Heart left ventricle (tissue), 16 donors: ENCODE measurements at regions of chr12 and their contacts with region 1.

Region 1: GRCh38 chr12:9707864-9708808 is 24.8 kb downstream of the CLECL1 start:
- DNase-seq: peak; percentile 30 to 54 (median 40)
- ATAC-seq: peak in 3 of 4 donors; percentile 68 to 74 (median 70)
- H3K4me3 ChIP-seq: no peak overlapping the region
- H3K27ac ChIP-seq: peak overlapping the region in 1 of 12 donors; percentile 73
- H3K4me1 ChIP-seq: peaks cover 0 to 33% (median 0%) of the 10 kb centered on the region in 12 donors
- H3K27me3 ChIP-seq: no peaks in the 10 kb centered on the region
- CTCF ChIP-seq: peak; percentile 60 to 81 (median 72)
- POLR2A ChIP-seq: no peak

Region 2: DNA sequence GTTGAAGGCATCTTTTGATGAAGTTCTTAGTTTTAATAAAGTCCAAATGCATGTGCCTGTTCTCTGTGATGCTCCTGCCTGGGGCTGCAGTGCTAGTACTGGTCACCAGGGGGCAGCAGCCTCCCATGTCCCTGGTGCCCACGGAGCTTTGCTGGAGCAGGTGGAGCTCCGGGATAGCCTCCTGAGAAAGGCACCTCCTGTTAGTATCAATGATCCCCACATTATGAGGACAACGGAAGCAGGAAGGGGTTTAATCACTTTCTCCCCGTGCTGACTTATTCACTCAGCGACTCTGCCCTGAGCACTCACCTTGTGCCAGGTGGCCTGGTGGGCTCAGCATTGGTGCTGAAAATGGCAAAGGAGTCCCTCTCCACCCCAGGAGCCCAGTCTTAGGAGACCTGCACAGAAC is 376.9 kb before region 1 on chr12:
- intact Hi-C with region 1: loop called in 7 of 10 experiments (anchors 2 to 10 kb)
- DNase-seq: peak; percentile 34 to 84 (median 60)
- ATAC-seq: peak in 3 of 4 donors; percentile 62 to 86 (median 74)
- H3K4me3 ChIP-seq: no peak overlapping the region
- H3K27ac ChIP-seq: no peak overlapping the region
- H3K4me1 ChIP-seq: peaks cover 0 to 2% (median 0%) of the 10 kb centered on the region in 12 donors
- H3K27me3 ChIP-seq: no peaks in the 10 kb centered on the region
- CTCF ChIP-seq: peak; percentile 88 to 98 (median 95)
- POLR2A ChIP-seq: no peak

Region 3: DNA sequence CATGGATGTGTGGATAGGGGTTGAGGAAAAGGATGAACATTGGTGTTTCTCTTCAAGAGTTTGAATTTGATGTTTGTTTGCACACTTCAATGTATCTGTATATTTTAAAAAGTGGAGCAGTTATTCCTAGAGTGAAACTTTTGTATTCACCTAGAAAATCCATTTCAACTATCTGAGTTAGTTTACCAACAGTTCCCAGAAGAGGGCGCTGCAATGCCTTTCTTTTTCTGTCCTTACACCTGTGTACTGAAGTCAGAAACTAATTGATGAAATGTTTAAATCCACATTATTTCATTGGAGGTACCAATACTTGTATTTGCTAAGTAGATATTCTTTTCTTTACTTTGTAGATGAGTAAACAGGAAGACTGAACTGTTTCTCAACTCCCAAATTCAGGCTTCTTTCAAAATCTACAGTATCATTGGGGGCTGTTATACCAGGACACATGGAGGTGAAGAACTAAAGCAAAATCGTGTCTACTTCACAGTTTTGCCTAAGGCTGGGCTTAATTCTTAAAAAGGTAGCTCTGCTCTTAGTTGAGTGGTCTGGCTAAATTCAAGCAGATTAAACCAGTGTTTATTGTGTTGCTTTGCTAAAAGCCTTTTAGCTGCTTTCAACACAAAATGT is 73.8 kb before region 1 on chr12:
- intact Hi-C with region 1: loop called (anchors 1 to 5 kb)
- DNase-seq: peak in 3 of 5 donors; percentile 32 to 63 (median 37)
- ATAC-seq: no peak
- H3K4me3 ChIP-seq: no peak overlapping the region
- H3K27ac ChIP-seq: no peak overlapping the region
- H3K4me1 ChIP-seq: peaks cover 0 to 39% (median 0%) of the 10 kb centered on the region in 12 donors
- H3K27me3 ChIP-seq: no peaks in the 10 kb centered on the region
- CTCF ChIP-seq: peak; percentile 47 to 84 (median 70)
- POLR2A ChIP-seq: no peak

Region 4: DNA sequence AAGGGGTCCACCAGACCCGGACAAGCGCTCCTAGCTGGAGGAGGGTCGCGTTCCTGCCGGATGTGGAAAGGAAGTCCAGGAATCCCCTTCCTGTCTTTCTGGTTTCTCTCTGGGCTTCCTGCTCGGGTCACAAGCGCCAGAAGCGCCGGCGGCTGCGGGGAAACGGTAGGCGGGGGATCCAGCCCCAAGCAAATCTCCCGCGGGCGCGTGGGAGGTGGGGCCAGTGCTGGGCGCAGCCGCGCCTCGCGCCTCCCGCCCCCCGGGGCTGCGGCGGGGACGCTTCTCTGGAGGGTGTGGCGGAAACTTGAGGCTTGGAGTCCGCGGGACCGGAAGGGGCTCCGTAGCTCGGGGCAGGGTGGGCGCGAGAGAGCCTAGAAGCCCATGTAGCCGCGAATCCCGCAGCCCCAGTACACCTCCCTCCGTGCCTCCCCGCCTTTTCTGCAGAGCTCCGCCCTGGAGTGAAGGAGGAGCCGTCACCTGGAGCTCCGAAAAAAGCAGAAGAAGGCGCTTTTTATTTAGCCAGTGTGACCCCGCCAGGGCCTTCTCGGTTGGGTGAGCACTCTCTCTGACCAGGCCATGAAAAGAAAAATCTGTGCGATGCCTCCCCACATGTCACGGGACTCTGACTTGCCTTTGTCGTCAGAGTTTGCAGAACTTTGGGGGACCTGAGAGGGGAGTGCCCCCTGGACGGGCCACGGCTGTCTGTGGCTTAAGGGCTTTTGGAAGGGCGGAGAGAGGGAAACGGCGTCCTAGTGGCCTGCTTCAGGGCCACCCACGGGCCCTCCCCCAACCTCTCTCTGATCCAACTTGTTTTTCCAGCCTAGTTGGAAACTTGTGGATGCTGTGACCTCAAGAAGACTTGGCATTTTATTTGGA is 60.1 kb before region 1 on chr12:
- intact Hi-C with region 1: loop called in 2 of 10 experiments (anchors 5 kb)
- DNase-seq: peak; percentile 82 to 90 (median 84)
- ATAC-seq: peak; percentile 89 to 97 (median 95)
- H3K4me3 ChIP-seq: peak overlapping the region; percentile 38 to 84 (median 70)
- H3K27ac ChIP-seq: peak overlapping the region; percentile 83 to 95 (median 89)
- H3K4me1 ChIP-seq: peaks cover 0 to 45% (median 25%) of the 10 kb centered on the region in 12 donors
- H3K27me3 ChIP-seq: no peaks in the 10 kb centered on the region
- CTCF ChIP-seq: no peak
- POLR2A ChIP-seq: peak in 1 of 2 donors; percentile 76